ENCODE measurements at regions of chr6 and their contacts with region 1.

Region 1: GRCh38 chr6:135183532-135184440 is 2.7 kb downstream of the MYB start:
- DNase-seq: peak; percentile 79
- H3K4me3 Mint-ChIP-seq: peak overlapping the region; percentile 97
- H3K27ac Mint-ChIP-seq: peak overlapping the region; percentile 94
- H3K4me1 Mint-ChIP-seq: peaks cover 41% of the 10 kb centered on the region
- H3K27me3 Mint-ChIP-seq: no peaks in the 10 kb centered on the region

Region 2: GRCh38 chr6:134174672-134175198 is 1009.1 kb before region 1 on chr6:
- intact Hi-C with region 1: loop called (anchors 10 kb)
- DNase-seq: peak; percentile 87
- H3K4me3 Mint-ChIP-seq: peak overlapping the region; percentile 98
- H3K27ac Mint-ChIP-seq: peak overlapping the region; percentile 97
- H3K4me1 Mint-ChIP-seq: peaks cover 48% of the 10 kb centered on the region
- H3K27me3 Mint-ChIP-seq: peaks cover 4% of the 10 kb centered on the region

Region 3: DNA sequence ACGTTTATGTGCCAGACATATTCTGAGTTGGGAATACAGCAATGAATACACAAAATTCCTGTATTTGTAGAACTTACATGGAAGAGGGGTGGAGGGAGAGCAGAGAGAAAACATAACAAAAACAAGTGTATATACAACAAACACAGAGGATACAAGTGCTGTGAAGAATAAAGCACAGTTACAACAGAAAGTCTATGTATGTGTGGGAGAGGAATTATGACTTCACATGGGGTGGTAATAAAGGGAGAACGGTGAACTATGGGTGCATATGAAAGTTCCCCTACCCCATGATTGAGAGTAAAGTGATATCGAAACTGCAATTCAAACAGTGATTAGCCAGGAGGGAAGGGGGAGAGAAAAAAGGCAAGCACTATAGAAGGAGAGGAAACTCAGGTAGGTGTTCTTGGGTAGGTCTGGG is 153.7 kb before region 1 on chr6:
- intact Hi-C with region 1: loop called (anchors 5 kb)
- DNase-seq: no peak
- H3K4me3 Mint-ChIP-seq: peak overlapping the region; percentile 45
- H3K27ac Mint-ChIP-seq: peak overlapping the region; percentile 78
- H3K4me1 Mint-ChIP-seq: peaks cover 51% of the 10 kb centered on the region
- H3K27me3 Mint-ChIP-seq: no peaks in the 10 kb centered on the region

Region 4: GRCh38 chr6:135114355-135115145 is 69.2 kb before region 1 on chr6:
- intact Hi-C with region 1: loop called (anchors 1 kb)
- DNase-seq: peak; percentile 45
- H3K4me3 Mint-ChIP-seq: peak overlapping the region; percentile 58
- H3K27ac Mint-ChIP-seq: peak overlapping the region; percentile 95
- H3K4me1 Mint-ChIP-seq: peaks cover 81% of the 10 kb centered on the region
- H3K27me3 Mint-ChIP-seq: no peaks in the 10 kb centered on the region

Region 5: GRCh38 chr6:135170849-135171248 is 12.9 kb before region 1 on chr6:
- intact Hi-C with region 1: loop called (anchors 1 kb)
- DNase-seq: no peak
- H3K4me3 Mint-ChIP-seq: peak overlapping the region; percentile 35
- H3K27ac Mint-ChIP-seq: peak overlapping the region; percentile 86
- H3K4me1 Mint-ChIP-seq: peaks cover 43% of the 10 kb centered on the region
- H3K27me3 Mint-ChIP-seq: no peaks in the 10 kb centered on the region

Region 6: DNA sequence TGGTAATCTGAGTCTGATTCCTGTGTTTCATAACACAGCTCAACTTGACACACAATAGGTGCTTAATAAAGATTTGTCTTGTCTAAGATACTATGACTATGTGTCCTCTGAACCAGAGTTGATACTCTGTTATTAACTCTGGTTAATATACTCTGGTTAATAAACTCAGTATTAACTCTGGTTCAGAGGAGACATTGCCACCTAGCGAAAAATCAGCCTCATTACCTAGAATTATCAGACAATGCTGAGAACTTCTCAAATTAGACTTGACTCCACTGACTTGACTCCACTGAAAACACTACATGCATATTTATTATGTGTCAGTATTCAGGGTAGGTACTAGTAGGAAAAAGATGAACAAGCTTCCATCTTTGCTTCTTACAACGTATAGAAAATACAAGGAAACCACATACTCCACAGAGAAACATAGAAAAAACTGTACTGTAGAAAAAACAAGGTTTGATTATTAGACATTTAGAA is 239.9 kb after region 1 on chr6:
- intact Hi-C with region 1: loop called (anchors 5 kb)
- DNase-seq: no peak
- H3K4me3 Mint-ChIP-seq: no peak overlapping the region
- H3K27ac Mint-ChIP-seq: peak overlapping the region; percentile 38
- H3K4me1 Mint-ChIP-seq: peaks cover 32% of the 10 kb centered on the region
- H3K27me3 Mint-ChIP-seq: no peaks in the 10 kb centered on the region

Region 7: DNA sequence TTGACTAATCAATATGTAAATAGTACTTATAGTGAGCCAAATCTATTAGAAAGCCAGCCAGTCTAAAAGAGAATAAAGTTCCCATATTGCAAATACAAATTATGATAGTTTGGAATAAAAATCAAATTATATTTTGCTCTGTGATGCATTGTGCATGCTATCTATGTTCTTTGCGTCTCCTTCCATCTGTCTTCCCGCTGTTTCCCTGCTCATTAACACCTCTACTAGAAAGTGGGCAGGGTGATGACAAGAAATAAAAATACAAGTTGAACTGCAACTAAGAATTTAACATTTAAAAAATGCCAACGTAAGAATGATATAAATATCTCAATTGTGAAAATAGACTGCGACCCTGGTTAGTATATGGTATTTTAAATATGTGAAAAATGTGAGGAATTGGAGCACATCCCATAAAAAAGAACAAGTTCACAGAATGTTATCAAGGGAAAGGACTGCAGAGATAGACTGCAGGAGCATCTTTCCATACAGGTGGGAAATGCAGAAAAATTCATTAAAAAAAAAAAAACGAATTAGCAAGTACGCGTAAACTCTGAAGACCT is 510.1 kb after region 1 on chr6:
- intact Hi-C with region 1: no loop called
- DNase-seq: no peak
- H3K4me3 Mint-ChIP-seq: no peak overlapping the region
- H3K27ac Mint-ChIP-seq: no peak overlapping the region
- H3K4me1 Mint-ChIP-seq: peaks cover 36% of the 10 kb centered on the region
- H3K27me3 Mint-ChIP-seq: no peaks in the 10 kb centered on the region